ACHN (cell line): ENCODE measurements at regions of chr12 and their contacts with region 1.

Region 1: GRCh38 chr12:113049976-113050742 is 6.4 kb upstream of the DTX1 start:
- DNase-seq: peak; percentile 81

Region 2: DNA sequence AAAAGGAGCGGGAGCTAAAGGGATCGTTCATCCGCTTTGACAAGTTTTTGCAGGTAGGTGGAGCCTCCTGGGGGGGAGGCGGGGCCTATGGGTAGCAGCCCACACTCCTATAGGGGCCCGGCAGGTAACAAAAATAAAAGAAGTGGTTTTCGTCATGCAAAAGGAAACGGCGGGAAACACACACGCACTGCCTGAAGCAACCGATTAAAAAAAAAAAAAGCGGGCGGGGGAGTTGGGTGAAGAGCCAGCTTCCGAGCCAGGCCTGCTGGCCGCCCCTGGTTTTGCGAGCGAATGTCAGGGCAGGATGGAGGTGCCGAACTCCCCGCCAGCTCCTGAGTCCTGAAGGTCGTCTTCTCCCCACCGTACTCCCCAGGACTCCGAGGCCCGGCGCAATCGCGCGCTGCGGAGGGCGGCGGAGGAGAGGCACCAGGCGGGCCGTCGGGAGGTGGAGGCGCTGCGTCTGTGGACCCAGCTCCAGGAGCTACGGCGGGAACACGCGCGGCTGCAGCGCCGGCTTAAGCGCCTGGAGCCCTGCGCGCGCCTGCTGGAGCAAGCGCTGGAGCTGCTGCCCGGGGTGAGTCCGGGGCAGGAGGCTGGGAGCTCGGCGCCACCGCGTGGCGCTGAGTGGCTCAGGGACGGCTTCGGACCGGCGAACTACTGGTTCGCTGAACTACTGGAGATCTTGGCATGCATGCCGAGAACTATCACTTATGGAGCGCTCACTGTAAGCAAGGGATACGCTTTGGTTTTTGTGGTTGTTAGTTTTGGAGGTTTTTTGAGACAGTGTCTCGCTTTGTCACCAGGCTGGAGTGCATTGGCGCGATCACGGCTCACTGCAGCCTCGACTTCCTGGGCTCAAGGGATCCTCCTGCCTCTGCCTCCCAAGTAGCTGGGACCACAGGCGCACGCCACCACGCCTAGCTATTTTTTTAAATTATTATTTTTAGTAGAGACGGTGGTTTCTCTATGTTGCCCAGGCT is 103.0 kb after region 1 on chr12:
- in situ Hi-C with region 1: loop called (anchors 25 kb)
- DNase-seq: peak; percentile 93